HepG2 (cell line): ENCODE measurements at regions of chr2 and their contacts with region 1.

Region 1: DNA sequence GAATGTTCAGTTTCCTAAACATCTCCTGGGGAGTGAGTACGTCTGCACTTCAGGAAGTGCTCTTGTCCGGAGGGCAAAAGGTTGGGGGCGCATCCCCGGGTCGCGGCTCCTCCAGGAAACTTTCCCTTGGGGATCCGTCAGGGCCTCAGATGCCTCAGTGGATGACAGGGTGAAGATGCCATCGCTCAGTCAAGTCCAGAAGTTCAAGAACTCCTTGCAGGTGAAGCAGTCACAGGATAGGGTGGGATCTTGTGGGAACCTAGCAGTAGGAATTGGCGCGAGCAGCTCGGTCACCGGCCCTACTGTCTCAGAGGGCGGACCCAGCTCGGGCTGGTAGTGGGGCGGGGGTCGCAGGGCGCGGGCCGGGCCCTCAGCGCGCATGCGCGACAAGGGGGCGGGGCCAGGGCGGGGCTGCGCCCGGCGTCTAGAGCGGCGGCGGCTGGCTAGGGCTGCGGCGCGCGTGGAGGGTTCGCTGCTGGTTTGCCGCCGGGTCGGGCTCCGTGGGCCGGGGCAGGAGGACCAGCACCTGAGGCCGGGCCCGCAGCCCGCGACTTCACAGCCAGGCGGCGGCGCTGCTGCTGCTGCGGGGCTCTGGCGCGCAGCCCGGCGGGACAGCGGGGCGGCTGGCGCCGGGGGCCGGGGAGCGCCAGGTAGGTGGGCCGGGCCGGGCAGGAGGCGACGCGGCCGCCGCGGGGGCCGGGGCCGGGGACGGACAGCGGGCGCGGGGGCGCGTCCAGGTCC is at the start of gene INPP4A:
- DNase-seq: peak; percentile 66
- ATAC-seq: peak; percentile 89
- H3K4me3 ChIP-seq: peak within 1 kb of the TSS; percentile 81 to 98 (median 85)
- H3K27ac ChIP-seq: peak within 1 kb of the TSS; percentile 34
- H3K4me1 ChIP-seq: peaks cover 40% of the 10 kb centered on the region
- H3K27me3 ChIP-seq: no peaks in the 10 kb centered on the region; a peak in 1 of 5 replicates
- CTCF ChIP-seq: peak; percentile 30; the same call in 1 of the 2 replicates
- EP300 ChIP-seq: no peak
- POLR2A ChIP-seq: peak in 1 of 2 experiments; percentile 88; a peak in 2 of 4 replicates
- RAD21 ChIP-seq: peak; percentile 75
- total RNA-seq, gene INPP4A: 7.9 and 10.9 TPM in 2 replicates

Region 2: GRCh38 chr2:98269274-98269673 is 175.3 kb before region 1 on chr2:
- CTCF ChIA-PET with region 1: no interaction called
- POLR2A ChIA-PET with region 1: no interaction called
- in situ Hi-C with region 1: no loop called
- intact Hi-C with region 1: no loop called
- DNase-seq: peak; percentile 44
- ATAC-seq: peak; percentile 80
- H3K4me3 ChIP-seq: no peak overlapping the region
- H3K27ac ChIP-seq: no peak overlapping the region
- H3K4me1 ChIP-seq: no peaks in the 10 kb centered on the region
- H3K27me3 ChIP-seq: peaks cover 0 to 13% of the 10 kb centered on the region in 2 experiments; a peak in 3 of 5 replicates
- CTCF ChIP-seq: peak; percentile 76
- EP300 ChIP-seq: no peak
- POLR2A ChIP-seq: no peak
- RAD21 ChIP-seq: peak; percentile 69

Region 3: DNA sequence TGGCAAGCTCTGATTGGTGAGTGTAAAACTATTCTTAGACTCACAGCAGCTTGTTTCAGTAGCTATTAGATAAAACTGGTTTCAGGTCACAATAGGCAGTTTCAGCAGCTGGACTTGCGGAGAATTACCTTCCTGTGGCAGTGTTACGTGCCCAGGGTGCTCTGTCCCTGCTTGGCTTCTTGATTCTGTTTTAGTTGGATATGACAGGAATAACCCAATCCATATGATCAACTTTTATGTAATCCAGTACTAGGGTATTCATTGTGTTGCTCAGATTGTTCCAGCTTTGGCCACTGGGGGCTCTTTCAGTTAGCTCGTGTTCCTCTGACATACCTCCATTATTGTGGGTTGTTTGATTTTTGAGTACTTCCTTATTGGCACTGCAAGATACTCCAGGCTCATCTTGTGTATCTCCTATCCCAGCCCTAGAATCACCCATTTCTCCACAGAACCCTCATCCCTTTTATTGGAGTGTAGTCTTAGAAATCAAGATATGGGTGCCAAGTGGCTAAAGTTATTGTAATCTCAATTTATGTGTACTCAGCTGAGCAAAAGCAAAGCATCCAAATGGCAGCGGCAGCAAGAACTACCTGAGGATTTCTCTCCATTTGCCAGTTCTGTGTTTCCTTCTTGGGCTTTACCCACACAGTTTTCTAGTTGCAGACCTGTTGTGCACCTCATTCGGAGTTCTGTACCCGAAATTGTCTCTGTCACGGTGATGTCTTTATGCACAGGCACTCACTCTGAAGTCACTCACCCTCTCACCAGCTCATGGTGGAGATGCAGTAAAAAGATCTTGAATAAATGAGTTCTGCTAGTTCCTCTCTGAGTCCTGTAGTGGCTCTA is 43.4 kb after region 1 on chr2:
- CTCF ChIA-PET with region 1: no interaction called
- POLR2A ChIA-PET with region 1: no interaction called
- in situ Hi-C with region 1: no loop called
- intact Hi-C with region 1: loop called (anchors 5 kb)
- DNase-seq: peak; percentile 66
- ATAC-seq: peak; percentile 79
- H3K4me3 ChIP-seq: peak overlapping the region in 2 of 3 experiments; percentile 24 to 34; a peak in 4 of 6 replicates
- H3K27ac ChIP-seq: peak overlapping the region; percentile 74
- H3K4me1 ChIP-seq: peaks cover 43% of the 10 kb centered on the region
- H3K27me3 ChIP-seq: no peaks in the 10 kb centered on the region
- CTCF ChIP-seq: peak; percentile 52
- EP300 ChIP-seq: no peak
- POLR2A ChIP-seq: no peak
- RAD21 ChIP-seq: no peak

Region 4: DNA sequence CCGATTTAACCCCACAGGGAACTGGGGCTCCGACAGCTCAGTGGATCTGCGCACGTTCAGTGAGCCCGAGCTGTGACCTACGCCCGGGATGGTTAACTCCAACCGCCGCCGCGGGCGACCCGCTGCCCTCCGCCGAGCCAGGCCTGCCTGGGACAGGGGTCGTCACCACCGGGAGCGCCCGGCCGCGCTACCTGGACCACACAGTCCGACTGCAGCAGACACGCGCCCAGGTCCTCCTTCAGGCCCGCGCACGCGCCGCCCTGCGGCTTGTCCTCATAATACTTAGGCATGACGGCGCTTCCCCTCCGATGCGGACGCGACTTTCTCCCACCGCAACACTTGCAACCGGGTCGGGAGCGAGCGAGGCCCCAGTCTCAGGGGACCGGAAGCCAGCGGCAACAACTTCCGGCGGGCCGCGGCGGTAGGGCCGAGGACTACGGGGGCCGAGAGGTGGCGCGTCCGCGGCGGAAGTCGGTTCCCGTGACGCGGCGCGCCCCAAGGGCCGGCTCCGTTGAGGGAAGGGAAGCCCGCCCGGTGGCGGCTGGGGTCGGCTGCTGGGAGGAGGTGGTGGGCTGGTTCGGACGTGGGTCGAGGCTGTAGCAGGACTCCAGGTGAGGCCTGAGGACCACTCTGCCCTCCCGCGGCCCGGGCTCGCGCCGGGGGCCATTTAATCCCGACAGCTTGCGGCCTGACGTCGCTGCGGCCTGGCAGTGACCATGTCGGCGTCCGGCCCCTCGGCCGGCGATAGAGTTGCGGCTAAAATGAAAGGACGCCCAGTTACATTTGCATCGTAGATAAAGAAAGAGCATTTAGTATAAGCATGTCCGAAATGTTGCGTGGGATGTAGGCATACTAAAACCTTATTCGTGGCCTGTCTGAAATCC is 163.8 kb after region 1 on chr2 and contains the starts of genes COA5 and UNC50:
- CTCF ChIA-PET with region 1: no interaction called
- POLR2A ChIA-PET with region 1: no interaction called
- in situ Hi-C with region 1: no loop called
- intact Hi-C with region 1: loop called (anchors 10 kb)
- DNase-seq: peak; percentile 86
- ATAC-seq: peak; percentile 95
- H3K4me3 ChIP-seq: peak within 1 kb of the TSS; percentile 95 to 98 (median 97)
- H3K27ac ChIP-seq: peak within 1 kb of the TSS; percentile 88
- H3K4me1 ChIP-seq: peaks cover 41% of the 10 kb centered on the region
- H3K27me3 ChIP-seq: no peaks in the 10 kb centered on the region; a peak in 1 of 5 replicates
- CTCF ChIP-seq: peak; percentile 42; the same call in 1 of the 2 replicates
- EP300 ChIP-seq: peak; percentile 48 to 51; a peak in 1 of 4 replicates
- POLR2A ChIP-seq: peak; percentile 92 to 97
- RAD21 ChIP-seq: peak; percentile 52
- total RNA-seq, gene COA5: 64.5 and 72.9 TPM in 2 replicates
- total RNA-seq, gene UNC50: 58.0 and 95.6 TPM in 2 replicates

Region 5: DNA sequence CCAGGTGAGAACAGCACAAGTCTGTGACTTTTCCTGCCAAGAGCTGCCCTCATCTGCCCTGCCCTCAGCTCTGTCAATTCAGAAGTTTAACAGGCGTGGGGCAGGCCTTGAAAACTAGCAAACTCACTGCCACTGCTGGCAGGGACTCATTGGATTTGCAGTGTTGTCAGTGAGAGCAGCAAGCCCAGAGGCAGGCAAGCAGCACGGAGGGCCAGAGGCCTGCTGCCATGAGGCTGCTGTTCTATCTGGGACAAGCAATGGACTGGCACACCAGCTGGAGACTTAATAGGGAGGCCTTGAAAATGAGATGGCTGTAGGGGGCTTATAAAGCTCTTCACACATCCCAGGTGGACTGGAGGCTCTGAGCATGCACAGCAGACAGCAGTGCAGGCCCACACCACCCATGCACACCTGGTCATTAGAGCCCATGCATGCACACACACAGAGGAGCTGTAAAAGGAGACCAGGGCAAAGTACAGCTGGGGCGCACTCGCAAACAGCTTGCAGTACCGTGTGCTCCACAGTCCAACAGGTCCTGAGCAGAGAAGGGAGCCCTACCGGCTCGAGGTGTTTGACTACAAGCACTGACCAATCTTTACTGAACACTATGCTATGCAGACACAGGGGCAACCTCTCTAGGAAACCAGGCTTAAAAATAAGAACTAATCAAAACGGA is 257.7 kb after region 1 on chr2:
- CTCF ChIA-PET with region 1: no interaction called
- POLR2A ChIA-PET with region 1: no interaction called
- in situ Hi-C with region 1: no loop called
- intact Hi-C with region 1: no loop called
- DNase-seq: peak; percentile 91
- ATAC-seq: peak; percentile 99
- H3K4me3 ChIP-seq: peak overlapping the region; percentile 21 to 55 (median 29)
- H3K27ac ChIP-seq: peak overlapping the region; percentile 88
- H3K4me1 ChIP-seq: peaks cover 63% of the 10 kb centered on the region
- H3K27me3 ChIP-seq: no peaks in the 10 kb centered on the region
- CTCF ChIP-seq: peak; percentile 41
- EP300 ChIP-seq: peak in 1 of 2 experiments; percentile 73; a peak in 2 of 4 replicates
- POLR2A ChIP-seq: peak; percentile 74 to 82
- RAD21 ChIP-seq: peak; percentile 28; the same call in 1 of the 2 replicates